Activated T-helper 2 cell treated with anti-CD3 and anti-CD28 coated beads, Interferon-gamma antibody, Interleukin-2, Interleukin-4, amounts not matched to agents 10 μg/mL and 5 μg/mL and 100 μg/mL, durations not matched to agents 14 hours and 24 hours and 36 hours (primary cell): ENCODE measurements at regions of chr20 and their contacts with region 1.

Region 1: GRCh38 chr20:32031007-32031958 is 20.8 kb upstream of the HCK start:
- DNase-seq: peak; percentile 28
- H3K4me3 Mint-ChIP-seq: no peak overlapping the region
- H3K27ac Mint-ChIP-seq: no peak overlapping the region
- H3K4me1 Mint-ChIP-seq: peaks cover 3% of the 10 kb centered on the region
- H3K27me3 Mint-ChIP-seq: peaks cover 43% of the 10 kb centered on the region

Region 2: DNA sequence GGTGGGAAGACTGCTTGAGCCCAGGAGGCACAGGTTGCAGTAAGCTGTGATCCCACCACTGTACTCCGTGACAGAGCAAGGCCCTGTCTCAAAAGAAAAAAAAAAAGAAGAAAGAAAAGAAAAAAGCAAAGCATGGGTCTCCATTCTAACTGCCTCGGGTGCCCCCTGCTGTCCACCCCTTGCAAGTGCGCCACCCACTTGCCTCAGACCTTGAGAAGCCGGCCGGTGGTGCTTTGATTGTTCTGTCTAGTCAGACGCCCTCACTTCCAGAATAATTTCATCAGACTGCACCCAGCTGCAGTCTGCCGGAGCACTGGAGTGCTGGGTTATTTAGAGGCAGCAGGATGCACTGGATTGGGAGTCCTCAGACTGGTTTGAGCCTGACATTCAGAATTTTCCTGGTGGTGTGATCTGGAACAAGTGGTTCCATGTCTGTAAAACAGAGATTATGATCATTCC is 60.6 kb after region 1 on chr20:
- intact Hi-C with region 1: loop called (anchors 10 kb)
- DNase-seq: peak; percentile 63
- H3K4me3 Mint-ChIP-seq: no peak overlapping the region
- H3K27ac Mint-ChIP-seq: no peak overlapping the region
- H3K4me1 Mint-ChIP-seq: peaks cover 2% of the 10 kb centered on the region
- H3K27me3 Mint-ChIP-seq: peaks cover 19% of the 10 kb centered on the region

Region 3: DNA sequence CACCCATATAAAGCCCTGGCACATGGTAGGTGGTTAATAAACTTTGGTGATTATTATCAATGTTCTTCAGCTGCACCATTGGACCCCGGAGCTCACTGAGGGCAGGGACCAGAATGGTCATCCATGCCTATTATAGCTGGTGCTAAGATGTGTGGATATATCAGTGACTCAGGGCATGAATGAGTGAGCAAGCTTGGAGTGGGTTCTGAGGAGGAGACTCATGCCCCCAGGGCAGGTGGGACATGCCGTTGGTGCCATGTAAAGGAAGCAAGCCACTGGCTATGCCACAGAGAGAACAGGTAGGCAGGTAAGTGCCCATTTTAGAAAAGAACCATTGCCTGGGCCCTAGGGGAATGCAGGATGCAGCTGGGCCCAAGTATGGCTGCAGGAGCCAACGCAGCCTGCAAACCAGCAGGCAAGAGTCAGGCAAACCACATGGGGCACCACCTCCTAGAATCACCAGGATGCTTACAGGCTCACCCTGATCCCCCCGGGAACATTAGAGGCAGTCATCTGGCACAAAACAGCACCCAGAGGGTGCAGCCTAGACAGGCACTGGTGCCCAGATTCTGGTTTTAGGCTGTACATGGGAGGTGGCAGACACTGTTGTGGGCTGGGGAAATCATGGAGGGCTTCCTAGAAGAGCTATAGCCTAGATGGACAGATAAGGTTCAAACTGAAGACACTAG is 152.8 kb after region 1 on chr20:
- intact Hi-C with region 1: no loop called
- DNase-seq: no peak
- H3K4me3 Mint-ChIP-seq: no peak overlapping the region
- H3K27ac Mint-ChIP-seq: no peak overlapping the region
- H3K4me1 Mint-ChIP-seq: peaks cover 4% of the 10 kb centered on the region
- H3K27me3 Mint-ChIP-seq: no peaks in the 10 kb centered on the region